ENCODE measurements at regions of chr17 and their contacts with region 1.

Region 1: GRCh38 chr17:1058423-1059130 is 61.6 kb downstream of the TIMM22 start:
- DNase-seq: peak; percentile 68
- H3K4me3 Mint-ChIP-seq: no peak overlapping the region
- H3K27ac Mint-ChIP-seq: peak overlapping the region; percentile 67
- H3K4me1 Mint-ChIP-seq: no peaks in the 10 kb centered on the region
- H3K27me3 Mint-ChIP-seq: no peaks in the 10 kb centered on the region
- CTCF ChIP-seq: peak; percentile 63

Region 2: GRCh38 chr17:1098387-1098786 is 39.8 kb after region 1 on chr17:
- CTCF ChIA-PET with region 1: no interaction called
- intact Hi-C with region 1: no loop called
- DNase-seq: no peak
- H3K4me3 Mint-ChIP-seq: no peak overlapping the region
- H3K27ac Mint-ChIP-seq: no peak overlapping the region
- H3K4me1 Mint-ChIP-seq: no peaks in the 10 kb centered on the region
- H3K27me3 Mint-ChIP-seq: no peaks in the 10 kb centered on the region
- CTCF ChIP-seq: no peak

Region 3: DNA sequence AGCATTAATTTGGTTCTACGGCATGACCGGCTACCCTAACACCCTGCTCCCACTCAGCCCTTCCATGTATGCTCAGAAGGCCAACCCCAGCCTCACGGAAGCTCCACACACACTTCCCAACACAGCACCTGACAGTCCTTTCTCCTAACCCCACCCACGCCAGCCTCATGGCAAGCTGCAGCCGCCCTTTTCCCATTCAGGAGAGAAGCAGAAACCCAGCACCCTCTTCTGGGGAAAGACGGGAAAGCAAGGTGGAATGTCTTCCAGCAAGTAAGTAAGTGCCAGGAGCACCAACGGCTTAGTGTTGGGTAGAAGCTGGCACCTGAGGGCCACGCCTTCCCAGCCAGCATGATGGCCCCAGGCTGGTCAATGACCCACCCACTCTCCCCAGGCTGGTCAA is 89.1 kb after region 1 on chr17:
- CTCF ChIA-PET with region 1: interaction called, 22 read pairs
- intact Hi-C with region 1: loop called (anchors 10 kb)
- DNase-seq: peak; percentile 80
- H3K4me3 Mint-ChIP-seq: no peak overlapping the region
- H3K27ac Mint-ChIP-seq: peak overlapping the region; percentile 83
- H3K4me1 Mint-ChIP-seq: peaks cover 8% of the 10 kb centered on the region
- H3K27me3 Mint-ChIP-seq: no peaks in the 10 kb centered on the region
- CTCF ChIP-seq: peak; percentile 60

Region 4: GRCh38 chr17:1179818-1180742 is 121.5 kb after region 1 on chr17 and contains the start of gene ABR:
- CTCF ChIA-PET with region 1: no interaction called
- intact Hi-C with region 1: no loop called
- DNase-seq: no peak
- H3K4me3 Mint-ChIP-seq: peak within 1 kb of the TSS; percentile 47
- H3K27ac Mint-ChIP-seq: no peak within 1 kb of the TSS
- H3K4me1 Mint-ChIP-seq: no peaks in the 10 kb centered on the region
- H3K27me3 Mint-ChIP-seq: no peaks in the 10 kb centered on the region
- CTCF ChIP-seq: no peak
- total RNA-seq, gene ABR: 76.3 and 92.7 TPM in 2 replicates